Activated CD8-positive, alpha-beta memory T cell treated with anti-CD3 and anti-CD28 coated beads, Interleukin-2, amount 10 ng/mL, durations not matched to agents 7 days and 5 days (primary cell): ENCODE measurements at regions of chr18 and their contacts with region 1.

Region 1: DNA sequence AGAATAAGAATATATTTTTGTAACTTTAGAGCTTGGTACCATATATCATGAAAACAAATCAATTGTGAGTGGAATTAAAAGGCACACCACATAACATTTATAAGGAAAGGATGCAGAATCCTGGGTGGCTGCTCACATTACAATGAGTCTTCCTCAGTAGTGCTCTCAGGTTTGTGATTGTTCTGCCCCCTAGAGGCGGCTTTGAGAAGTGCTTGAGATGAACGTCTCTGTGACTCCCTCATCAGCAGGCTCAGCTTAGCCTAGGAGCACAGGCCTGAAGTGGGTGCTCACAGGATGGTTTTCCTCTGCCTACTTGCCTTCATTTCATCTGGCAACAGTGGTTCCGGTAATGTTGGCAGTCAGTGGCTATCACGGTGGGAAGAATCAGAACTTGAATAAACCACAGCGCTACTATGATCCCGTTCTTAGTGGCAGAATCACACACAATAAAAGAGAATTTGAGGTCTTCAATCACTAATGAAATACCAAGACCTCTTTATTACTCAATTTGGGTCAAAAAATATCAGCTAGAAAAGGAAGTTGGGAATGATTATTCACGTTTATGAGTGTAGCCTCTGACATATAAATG is 38.1 kb upstream of the B4GALT6 start:
- DNase-seq: peak; percentile 80
- ATAC-seq: peak; percentile 91
- H3K4me3 Mint-ChIP-seq: no peak overlapping the region
- H3K27ac Mint-ChIP-seq: no peak overlapping the region
- H3K4me1 Mint-ChIP-seq: no peaks in the 10 kb centered on the region
- H3K27me3 Mint-ChIP-seq: peaks cover 35% of the 10 kb centered on the region

Region 2: DNA sequence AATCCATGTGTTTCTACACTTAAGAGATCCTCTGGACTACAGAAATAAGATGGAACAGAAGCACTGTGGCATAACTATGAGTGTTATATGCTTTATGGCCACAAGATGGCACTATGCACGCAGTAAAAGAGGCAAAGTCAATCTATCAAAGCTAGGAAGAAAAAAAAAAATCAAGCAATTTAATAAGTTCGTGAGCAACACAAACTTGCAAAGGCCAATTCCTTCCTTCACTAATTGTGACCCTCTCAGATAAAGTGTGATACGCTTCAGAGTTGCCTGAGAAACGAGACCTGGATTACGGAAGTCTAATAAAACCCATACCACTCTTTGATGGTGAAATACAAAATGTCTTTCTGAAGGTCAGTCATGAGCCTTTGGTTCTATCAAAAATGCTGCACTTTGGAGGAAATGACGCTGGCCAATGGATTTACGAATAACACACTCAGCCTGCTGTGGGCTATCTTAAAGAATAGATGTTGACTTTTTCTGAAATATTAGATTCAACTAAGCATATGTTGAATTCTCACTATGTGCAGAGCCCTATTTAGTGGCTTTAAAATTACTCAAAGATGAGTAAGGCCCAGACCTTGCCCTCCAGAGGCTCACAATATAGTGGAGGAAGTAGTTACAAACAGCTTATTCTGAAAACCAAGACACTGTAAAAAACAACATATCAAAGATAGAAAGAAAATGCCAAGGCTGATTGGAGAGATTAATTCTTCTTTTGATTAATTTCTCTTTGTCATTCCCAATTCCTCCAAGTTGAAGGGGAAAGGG is 166.3 kb before region 1 on chr18:
- CTCF ChIA-PET with region 1: interaction called, 41 read pairs
- DNase-seq: peak; percentile 52
- ATAC-seq: peak; percentile 42
- H3K4me3 Mint-ChIP-seq: no peak overlapping the region
- H3K27ac Mint-ChIP-seq: no peak overlapping the region
- H3K4me1 Mint-ChIP-seq: no peaks in the 10 kb centered on the region
- H3K27me3 Mint-ChIP-seq: peaks cover 12% of the 10 kb centered on the region

Region 3: GRCh38 chr18:31702449-31702848 is 20.0 kb before region 1 on chr18:
- CTCF ChIA-PET with region 1: interaction called, 12 read pairs
- DNase-seq: no peak
- ATAC-seq: no peak
- H3K4me3 Mint-ChIP-seq: no peak overlapping the region
- H3K27ac Mint-ChIP-seq: no peak overlapping the region
- H3K4me1 Mint-ChIP-seq: peaks cover 4% of the 10 kb centered on the region
- H3K27me3 Mint-ChIP-seq: peaks cover 2% of the 10 kb centered on the region